Aorta (tissue), 5 donors: ENCODE measurements at regions of chr9 and their contacts with region 1.

Region 1: DNA sequence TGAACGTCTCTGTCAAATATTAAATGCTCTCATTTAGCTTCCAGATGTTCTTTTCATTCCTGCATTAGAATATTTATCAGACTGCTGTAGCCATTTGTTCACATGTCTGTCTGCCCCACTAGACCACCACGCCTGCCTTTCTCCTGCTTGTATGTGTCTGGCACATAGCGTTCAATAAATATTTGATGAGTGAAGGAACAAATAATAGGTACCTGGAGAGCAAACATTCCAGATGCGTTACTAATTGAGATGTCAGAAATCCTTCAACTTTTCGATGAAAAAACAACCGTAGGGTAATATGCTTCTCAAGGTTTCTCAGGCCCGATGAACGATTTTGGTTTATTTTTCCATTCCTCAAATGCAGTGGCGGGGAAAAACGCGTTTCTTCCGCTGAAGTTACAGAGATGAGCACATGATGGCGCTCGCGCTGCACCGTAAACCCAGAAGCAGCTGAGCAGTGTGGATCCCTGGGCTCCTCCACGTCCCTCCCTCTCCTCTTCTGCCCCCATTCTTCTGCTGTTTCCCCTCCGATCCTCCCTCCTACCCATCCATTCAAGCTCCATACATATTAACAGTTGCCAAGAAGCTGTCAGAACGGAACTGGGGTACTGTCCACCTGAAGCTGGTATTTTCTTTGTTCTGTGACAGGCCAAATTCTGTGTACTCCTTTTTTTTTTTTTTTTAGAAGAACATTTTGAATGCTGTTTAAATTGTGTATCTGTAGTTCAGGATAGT is 245.4 kb downstream of the MPDZ start:
- DNase-seq: peak; percentile 69 to 83
- ATAC-seq: peak; percentile 91
- H3K4me3 ChIP-seq: no peak overlapping the region
- H3K27ac ChIP-seq: no peak overlapping the region
- H3K4me1 ChIP-seq: no peaks in the 10 kb centered on the region
- H3K27me3 ChIP-seq: no peaks in the 10 kb centered on the region

Region 2: GRCh38 chr9:13088720-13089427 is 54.7 kb after region 1 on chr9:
- intact Hi-C with region 1: loop called in 1 of 2 experiments (anchors 2 kb)
- DNase-seq: peak in 1 of 2 donors; percentile 44
- ATAC-seq: peak; percentile 72
- H3K4me3 ChIP-seq: no peak overlapping the region
- H3K27ac ChIP-seq: no peak overlapping the region
- H3K4me1 ChIP-seq: peaks cover 0 to 4% of the 10 kb centered on the region in 2 donors
- H3K27me3 ChIP-seq: no peaks in the 10 kb centered on the region

Region 3: DNA sequence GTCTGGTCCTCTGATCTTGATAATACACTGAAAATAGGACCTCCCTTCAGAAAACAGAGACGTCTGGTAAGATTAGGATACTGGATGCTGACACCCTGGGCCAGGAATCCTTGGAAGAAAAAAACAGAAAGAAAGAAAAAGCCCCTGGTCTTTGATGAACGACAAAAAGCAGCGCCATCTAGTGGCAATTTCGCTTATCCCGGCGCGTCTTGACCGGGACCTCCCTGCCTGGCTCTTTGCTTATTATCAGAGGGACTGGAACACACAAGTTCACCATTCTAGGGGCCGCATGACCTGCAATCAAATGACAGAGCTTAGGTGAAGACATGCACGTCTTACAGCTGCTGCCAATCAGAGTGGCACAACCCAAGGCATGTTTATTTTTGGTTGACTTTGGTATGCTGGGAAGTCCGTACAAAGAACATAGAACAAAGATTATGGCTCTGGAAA is 1394.7 kb after region 1 on chr9:
- intact Hi-C with region 1: loop called (anchors 10 kb)
- DNase-seq: peak; percentile 76 to 89
- ATAC-seq: peak; percentile 51
- H3K4me3 ChIP-seq: no peak overlapping the region
- H3K27ac ChIP-seq: no peak overlapping the region
- H3K4me1 ChIP-seq: peaks cover 2 to 3% of the 10 kb centered on the region in 2 donors
- H3K27me3 ChIP-seq: no peaks in the 10 kb centered on the region